Psoas muscle (tissue), 8 donors: ENCODE measurements at regions of chr1 and their contacts with region 1.

Region 1: GRCh38 chr1:24847995-24848881 is 81.8 kb downstream of the RUNX3 start:
- DNase-seq: peak; percentile 92 to 95
- ATAC-seq: peak; percentile 95 to 99 (median 96)
- H3K4me3 ChIP-seq: peak overlapping the region; percentile 68
- H3K27ac ChIP-seq: peak overlapping the region; percentile 49
- H3K4me1 ChIP-seq: peaks cover 5% of the 10 kb centered on the region
- H3K27me3 ChIP-seq: peaks cover 0 to 3% (median 0%) of the 10 kb centered on the region in 3 donors
- CTCF ChIP-seq: peak; percentile 93

Region 2: DNA sequence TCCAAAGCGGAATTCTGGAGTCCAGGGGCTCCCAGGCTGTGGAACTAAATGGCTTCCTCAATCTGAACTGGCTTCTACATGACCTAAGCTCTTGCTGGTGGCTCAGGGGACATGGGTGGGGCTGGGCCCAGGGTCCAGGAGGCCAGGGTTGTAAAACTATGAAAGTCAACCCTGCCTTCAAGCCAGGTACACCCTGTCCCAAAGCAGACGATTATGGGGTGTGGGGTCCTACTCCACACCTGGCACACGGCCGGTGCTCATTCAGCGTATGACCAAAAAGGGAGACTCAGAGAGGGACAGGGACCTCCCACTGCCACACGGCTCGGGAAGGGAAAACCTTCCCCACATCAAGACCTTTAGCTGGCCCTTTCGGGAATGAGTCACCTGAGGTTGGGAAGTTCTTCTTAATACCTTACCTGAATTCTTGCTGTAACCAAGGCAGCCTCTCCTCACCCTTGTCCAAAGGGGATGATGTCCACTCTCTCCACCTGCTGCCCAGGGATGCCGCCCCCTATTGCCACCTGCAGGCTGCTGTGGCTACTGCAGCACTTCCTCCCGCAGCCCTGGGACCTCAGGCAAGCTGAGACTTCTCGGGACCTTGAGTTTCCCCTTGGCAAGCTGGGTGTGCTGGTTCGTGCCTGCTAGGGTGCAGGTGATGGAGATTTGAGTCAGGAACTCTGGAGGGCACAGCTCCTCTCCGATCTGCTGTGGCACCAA is 49.7 kb after region 1 on chr1:
- intact Hi-C with region 1: loop called in 1 of 2 experiments (anchors 5 kb)
- DNase-seq: no peak
- ATAC-seq: peak; percentile 51 to 76 (median 58)
- H3K4me3 ChIP-seq: no peak overlapping the region
- H3K27ac ChIP-seq: no peak overlapping the region
- H3K4me1 ChIP-seq: no peaks in the 10 kb centered on the region
- H3K27me3 ChIP-seq: peaks cover 0 to 11% (median 5%) of the 10 kb centered on the region in 3 donors
- CTCF ChIP-seq: peak; percentile 52

Region 3: DNA sequence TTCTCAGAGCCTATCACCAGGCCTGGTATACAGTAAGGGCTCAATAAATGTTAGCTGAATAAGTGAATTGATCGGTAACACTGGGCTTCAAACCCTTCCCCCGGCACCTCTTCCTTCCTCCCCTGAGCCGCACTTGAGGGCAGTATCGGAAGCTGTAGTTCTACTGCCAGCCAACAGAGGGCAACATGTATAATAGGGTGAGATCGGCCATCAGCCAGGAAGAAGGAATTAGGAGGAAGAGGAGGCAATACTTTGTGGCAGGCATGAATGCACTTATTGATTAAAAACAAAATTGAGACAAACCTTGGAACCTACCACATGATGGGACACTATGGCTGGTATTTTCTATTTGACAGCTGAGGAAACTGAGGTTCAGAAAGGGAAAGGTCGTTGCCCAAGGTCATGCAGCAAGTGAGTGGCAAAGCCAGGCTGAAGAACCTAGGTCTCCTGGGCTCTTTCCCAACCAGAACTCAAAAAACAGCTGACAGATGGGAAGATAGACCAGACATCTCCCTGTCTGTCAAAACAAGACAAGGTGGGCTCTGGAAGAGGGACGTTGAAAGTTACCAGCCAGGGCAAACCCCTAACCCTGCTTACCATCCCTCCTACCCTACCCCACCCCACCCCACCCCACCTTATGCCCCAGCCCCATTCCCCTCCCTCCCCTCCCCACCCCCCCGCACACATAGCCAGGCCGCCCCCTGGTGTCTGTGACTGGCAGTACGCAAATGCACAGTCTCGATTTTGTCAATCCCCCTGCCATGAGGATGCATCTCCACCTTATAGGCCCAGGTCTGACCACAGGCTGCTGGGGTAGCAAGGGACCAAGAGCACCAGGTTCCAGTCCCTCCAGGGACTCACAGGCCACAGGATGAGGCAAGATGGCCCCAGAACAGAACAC is 189.2 kb after region 1 on chr1:
- intact Hi-C with region 1: loop called in 1 of 2 experiments (anchors 5 kb)
- DNase-seq: peak in 1 of 2 donors; percentile 41
- ATAC-seq: peak; percentile 55 to 70 (median 66)
- H3K4me3 ChIP-seq: no peak overlapping the region
- H3K27ac ChIP-seq: no peak overlapping the region
- H3K4me1 ChIP-seq: no peaks in the 10 kb centered on the region
- H3K27me3 ChIP-seq: peaks cover 0 to 2% (median 0%) of the 10 kb centered on the region in 3 donors
- CTCF ChIP-seq: peak; percentile 49

Region 4: GRCh38 chr1:25204797-25205480 is 356.7 kb after region 1 on chr1:
- intact Hi-C with region 1: loop called (anchors 1 to 5 kb)
- DNase-seq: no peak
- ATAC-seq: peak in 3 of 4 donors; percentile 52 to 75 (median 55)
- H3K4me3 ChIP-seq: no peak overlapping the region
- H3K27ac ChIP-seq: no peak overlapping the region
- H3K4me1 ChIP-seq: peaks cover 4% of the 10 kb centered on the region
- H3K27me3 ChIP-seq: peaks cover 0 to 2% (median 0%) of the 10 kb centered on the region in 3 donors
- CTCF ChIP-seq: peak; percentile 78